Endothelial cell of umbilical vein (primary cell): ENCODE measurements at regions of chr11 and their contacts with region 1.

Region 1: GRCh38 chr11:86523738-86524619 is 148.4 kb downstream of the ME3 start:
- DNase-seq: peak; percentile 99
- H3K4me3 ChIP-seq: peak overlapping the region in 1 of 3 experiments; percentile 14
- H3K27ac ChIP-seq: peak overlapping the region; percentile 93
- H3K4me1 ChIP-seq: peaks cover 46% of the 10 kb centered on the region
- H3K27me3 ChIP-seq: no peaks in the 10 kb centered on the region
- CTCF ChIP-seq: no peak
- POLR2A ChIP-seq: peak; percentile 54

Region 2: GRCh38 chr11:86218125-86219084 is 305.6 kb before region 1 on chr11:
- CTCF ChIA-PET with region 1: no interaction called
- POLR2A ChIA-PET with region 1: no interaction called
- dilution Hi-C with region 1: no loop called
- intact Hi-C with region 1: no loop called
- DNase-seq: peak; percentile 82
- H3K4me3 ChIP-seq: peak overlapping the region in 1 of 3 experiments; percentile 3
- H3K27ac ChIP-seq: no peak overlapping the region
- H3K4me1 ChIP-seq: no peaks in the 10 kb centered on the region
- H3K27me3 ChIP-seq: peaks cover 1 to 12% of the 10 kb centered on the region in 2 experiments
- CTCF ChIP-seq: peak; percentile 86 to 91
- POLR2A ChIP-seq: no peak

Region 3: DNA sequence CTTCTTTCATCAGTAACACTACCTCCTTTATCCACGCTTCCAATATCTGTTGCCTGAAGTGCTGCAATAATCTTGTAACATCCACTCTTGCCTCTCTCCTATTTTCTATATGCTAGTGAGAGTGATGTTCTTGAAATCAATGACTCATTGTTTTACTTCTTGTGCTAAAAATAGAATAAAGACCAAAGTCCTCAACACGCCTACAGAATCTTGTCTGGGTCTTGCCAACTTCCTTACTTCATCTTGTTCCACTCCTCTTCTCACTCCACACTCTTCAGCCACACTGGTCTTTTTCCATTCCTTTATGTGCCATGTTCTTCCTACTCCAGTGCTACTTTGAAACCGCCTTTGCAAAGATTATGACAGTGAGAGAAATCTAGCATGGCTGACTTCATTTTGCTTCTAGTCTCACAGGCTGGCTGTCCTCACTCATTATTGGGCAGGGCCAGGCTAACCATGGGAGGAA is 12.9 kb before region 1 on chr11:
- CTCF ChIA-PET with region 1: interaction called, 4 read pairs
- POLR2A ChIA-PET with region 1: interaction called, 6 read pairs
- dilution Hi-C with region 1: no loop called
- intact Hi-C with region 1: loop called (anchors 1 kb)
- DNase-seq: peak; percentile 61
- H3K4me3 ChIP-seq: no peak overlapping the region
- H3K27ac ChIP-seq: no peak overlapping the region
- H3K4me1 ChIP-seq: peaks cover 31% of the 10 kb centered on the region
- H3K27me3 ChIP-seq: no peaks in the 10 kb centered on the region
- CTCF ChIP-seq: no peak
- POLR2A ChIP-seq: no peak

Region 4: DNA sequence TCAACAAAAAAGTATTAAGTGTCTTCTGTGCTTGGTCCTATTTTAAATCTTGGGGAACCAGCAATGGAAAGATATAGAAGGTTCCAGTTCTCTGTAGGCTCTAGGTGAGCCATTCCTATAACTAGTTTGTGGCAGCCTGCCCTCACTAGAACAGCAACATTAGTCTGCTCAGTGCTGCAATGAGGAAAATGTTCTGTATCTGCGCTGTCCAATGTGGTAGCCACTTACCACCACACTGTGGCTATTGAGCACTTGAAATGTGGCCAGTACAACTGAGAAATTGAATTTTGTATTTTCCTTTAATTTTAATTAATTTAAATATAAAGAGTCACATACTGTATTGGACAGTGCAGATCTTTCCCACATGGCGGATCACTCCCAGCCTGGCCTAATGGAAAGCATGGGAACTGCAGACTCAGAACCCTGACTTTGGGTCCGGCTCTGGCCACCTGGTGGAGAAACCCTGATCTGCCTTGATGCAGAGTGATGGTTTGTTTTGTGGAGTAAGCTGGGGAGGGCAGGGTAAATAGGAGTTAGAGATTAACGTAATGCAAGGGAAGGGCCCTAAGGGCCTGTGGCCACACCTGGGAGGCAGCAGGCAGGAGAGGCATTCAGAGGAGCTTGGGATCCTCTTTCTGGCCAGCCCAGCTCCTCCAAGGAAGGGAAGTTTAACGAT is 47.4 kb after region 1 on chr11:
- CTCF ChIA-PET with region 1: interaction called, 7 read pairs
- POLR2A ChIA-PET with region 1: no interaction called
- dilution Hi-C with region 1: no loop called
- intact Hi-C with region 1: loop called (anchors 1 kb)
- DNase-seq: peak; percentile 37
- H3K4me3 ChIP-seq: no peak overlapping the region
- H3K27ac ChIP-seq: no peak overlapping the region
- H3K4me1 ChIP-seq: peaks cover 38% of the 10 kb centered on the region
- H3K27me3 ChIP-seq: no peaks in the 10 kb centered on the region
- CTCF ChIP-seq: peak; percentile 48 to 56
- POLR2A ChIP-seq: no peak

Region 5: GRCh38 chr11:86592659-86593451 is 68.9 kb after region 1 on chr11:
- CTCF ChIA-PET with region 1: interaction called, 6 read pairs
- POLR2A ChIA-PET with region 1: no interaction called
- dilution Hi-C with region 1: no loop called
- intact Hi-C with region 1: loop called (anchors 1 kb)
- DNase-seq: peak; percentile 99
- H3K4me3 ChIP-seq: no peak overlapping the region
- H3K27ac ChIP-seq: peak overlapping the region; percentile 99
- H3K4me1 ChIP-seq: peaks cover 60% of the 10 kb centered on the region
- H3K27me3 ChIP-seq: no peaks in the 10 kb centered on the region
- CTCF ChIP-seq: no peak
- POLR2A ChIP-seq: peak; percentile 12

Region 6: DNA sequence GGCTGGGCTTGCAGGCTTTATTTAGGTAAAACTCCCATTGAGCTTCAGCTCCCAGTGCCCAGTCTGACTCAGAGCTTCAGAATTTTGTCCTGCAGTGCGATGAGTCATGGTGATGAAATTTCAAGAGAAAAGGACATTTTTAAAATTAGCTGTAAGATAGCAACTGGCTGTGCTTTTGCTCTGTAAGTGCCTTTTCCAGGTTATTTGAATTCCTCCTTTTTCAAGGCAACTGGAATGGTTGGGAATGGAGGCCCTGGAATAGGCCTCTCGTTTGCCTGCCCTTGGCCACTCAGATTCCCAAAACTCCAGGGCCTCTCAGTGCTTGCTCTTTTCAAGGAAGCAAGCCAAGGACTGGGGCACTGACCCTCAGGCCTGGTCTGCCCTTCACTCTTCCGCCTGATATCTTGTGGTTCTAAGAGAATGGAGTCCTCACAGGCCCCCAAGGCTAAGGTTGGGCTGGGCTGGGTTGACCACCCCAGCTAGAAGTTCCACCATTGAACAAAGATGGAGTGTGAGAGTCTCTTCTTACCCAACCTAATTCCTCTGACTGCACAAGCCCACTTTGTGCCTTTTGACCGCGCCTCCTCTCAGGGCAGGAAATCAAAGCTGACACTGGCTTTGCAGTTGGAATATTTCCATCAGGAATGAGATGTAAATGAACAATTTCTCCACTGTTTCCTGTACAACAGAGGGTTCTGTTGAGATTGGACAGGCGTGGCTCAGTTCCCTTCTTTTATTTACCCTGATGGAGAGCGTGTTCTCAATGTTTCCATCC is 216.9 kb after region 1 on chr11:
- CTCF ChIA-PET with region 1: interaction called, 3 read pairs
- POLR2A ChIA-PET with region 1: no interaction called
- dilution Hi-C with region 1: no loop called
- intact Hi-C with region 1: loop called (anchors 1 kb)
- DNase-seq: peak; percentile 94
- H3K4me3 ChIP-seq: peak overlapping the region in 1 of 3 experiments; percentile 7
- H3K27ac ChIP-seq: peak overlapping the region; percentile 99
- H3K4me1 ChIP-seq: peaks cover 78% of the 10 kb centered on the region
- H3K27me3 ChIP-seq: no peaks in the 10 kb centered on the region
- CTCF ChIP-seq: no peak
- POLR2A ChIP-seq: no peak